Activated T-helper 1 cell treated with anti-CD3 and anti-CD28 coated beads, Interleukin-12 subunit alpha, Interleukin-12 subunit beta, Interleukin-2, Interleukin-4 antibody, amounts not matched to agents 30 ng/mL and 10 ng/mL and 1 ng/mL, durations not matched to agents 14 hours and 24 hours and 36 hours (primary cell): ENCODE measurements at regions of chr9 and their contacts with region 1.

Region 1: GRCh38 chr9:89999534-90000370 is 394.9 kb downstream of the GADD45G start:
- DNase-seq: peak; percentile 68
- H3K4me3 Mint-ChIP-seq: peak overlapping the region; percentile 69
- H3K27ac Mint-ChIP-seq: peak overlapping the region; percentile 75
- H3K4me1 Mint-ChIP-seq: peaks cover 35% of the 10 kb centered on the region
- H3K27me3 Mint-ChIP-seq: no peaks in the 10 kb centered on the region

Region 2: GRCh38 chr9:89961616-89962341 is 38.0 kb before region 1 on chr9:
- intact Hi-C with region 1: loop called (anchors 5 kb)
- DNase-seq: no peak
- H3K4me3 Mint-ChIP-seq: no peak overlapping the region
- H3K27ac Mint-ChIP-seq: peak overlapping the region; percentile 41
- H3K4me1 Mint-ChIP-seq: peaks cover 15% of the 10 kb centered on the region
- H3K27me3 Mint-ChIP-seq: peaks cover 6% of the 10 kb centered on the region